ENCODE measurements at regions of chr12 and their contacts with region 1.

Region 1: GRCh38 chr12:46268590-46269558 is at the start of gene SLC38A1:
- DNase-seq: peak; percentile 74 to 96 (median 91)
- ATAC-seq: peak; percentile 56
- H3K4me3 ChIP-seq: peak within 1 kb of the TSS; percentile 92 to 96
- H3K4me3 Mint-ChIP-seq: no peak within 1 kb of the TSS
- H3K27ac ChIP-seq: peak within 1 kb of the TSS; percentile 96 to 98
- H3K27ac Mint-ChIP-seq: no peak within 1 kb of the TSS
- H3K4me1 ChIP-seq: peaks cover 54% of the 10 kb centered on the region
- H3K4me1 Mint-ChIP-seq: peaks cover 41% of the 10 kb centered on the region
- H3K27me3 ChIP-seq: no peaks in the 10 kb centered on the region
- H3K27me3 Mint-ChIP-seq: no peaks in the 10 kb centered on the region
- CTCF ChIP-seq: no peak
- total RNA-seq, gene SLC38A1: 440 to 464 TPM

Region 2: GRCh38 chr12:45728630-45729232 is 540.1 kb before region 1 on chr12:
- CTCF ChIA-PET with region 1: no interaction called
- POLR2A ChIA-PET with region 1: interaction called, 21 read pairs
- intact Hi-C with region 1: loop called in 1 of 2 experiments (anchors 5 kb)
- DNase-seq: peak; percentile 93 to 98 (median 97)
- ATAC-seq: peak; percentile 76
- H3K4me3 ChIP-seq: peak overlapping the region; percentile 85 to 90
- H3K4me3 Mint-ChIP-seq: peak overlapping the region; percentile 96
- H3K27ac ChIP-seq: peak overlapping the region; percentile 90 to 96
- H3K27ac Mint-ChIP-seq: peak overlapping the region; percentile 97
- H3K4me1 ChIP-seq: peaks cover 20% of the 10 kb centered on the region
- H3K4me1 Mint-ChIP-seq: peaks cover 26% of the 10 kb centered on the region
- H3K27me3 ChIP-seq: no peaks in the 10 kb centered on the region
- H3K27me3 Mint-ChIP-seq: no peaks in the 10 kb centered on the region
- CTCF ChIP-seq: peak; percentile 90

Region 3: DNA sequence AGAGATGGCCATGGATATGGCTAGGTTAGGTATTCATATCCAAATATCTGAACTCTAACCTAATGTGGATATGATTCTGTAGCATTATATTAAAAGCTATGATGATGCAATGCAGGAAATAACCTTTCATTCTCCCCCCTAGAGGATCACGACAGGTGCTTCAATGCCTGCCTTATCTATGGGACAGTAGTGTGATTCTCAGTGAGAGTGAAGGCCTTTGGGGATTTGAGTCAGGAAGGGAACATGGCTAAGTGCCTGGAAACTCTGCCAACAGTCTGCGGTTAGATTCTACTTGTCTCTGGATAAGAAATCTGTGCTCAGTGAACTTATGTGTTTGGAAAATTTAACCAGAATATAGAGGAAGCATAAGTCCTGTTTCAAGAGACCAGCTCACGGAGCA is 81.9 kb before region 1 on chr12:
- CTCF ChIA-PET with region 1: no interaction called
- POLR2A ChIA-PET with region 1: interaction called, 12 read pairs
- intact Hi-C with region 1: no loop called
- DNase-seq: peak in 1 of 9 experiments; percentile 40
- ATAC-seq: peak; percentile 33
- H3K4me3 ChIP-seq: no peak overlapping the region
- H3K4me3 Mint-ChIP-seq: no peak overlapping the region
- H3K27ac ChIP-seq: peak overlapping the region in 1 of 2 experiments; percentile 2
- H3K27ac Mint-ChIP-seq: peak overlapping the region; percentile 61
- H3K4me1 ChIP-seq: no peaks in the 10 kb centered on the region
- H3K4me1 Mint-ChIP-seq: peaks cover 40% of the 10 kb centered on the region
- H3K27me3 ChIP-seq: no peaks in the 10 kb centered on the region
- H3K27me3 Mint-ChIP-seq: no peaks in the 10 kb centered on the region
- CTCF ChIP-seq: no peak

Region 4: GRCh38 chr12:46209914-46210872 is 58.7 kb before region 1 on chr12:
- CTCF ChIA-PET with region 1: interaction called, 8 read pairs
- POLR2A ChIA-PET with region 1: interaction called, 232 read pairs
- intact Hi-C with region 1: loop called (anchors 1 kb)
- DNase-seq: peak in 8 of 9 experiments; percentile 39 to 84 (median 66)
- ATAC-seq: peak; percentile 63
- H3K4me3 ChIP-seq: no peak overlapping the region
- H3K4me3 Mint-ChIP-seq: peak overlapping the region; percentile 69
- H3K27ac ChIP-seq: peak overlapping the region; percentile 38 to 83
- H3K27ac Mint-ChIP-seq: peak overlapping the region; percentile 94
- H3K4me1 ChIP-seq: peaks cover 85% of the 10 kb centered on the region
- H3K4me1 Mint-ChIP-seq: peaks cover 95% of the 10 kb centered on the region
- H3K27me3 ChIP-seq: no peaks in the 10 kb centered on the region
- H3K27me3 Mint-ChIP-seq: no peaks in the 10 kb centered on the region
- CTCF ChIP-seq: no peak

Region 5: GRCh38 chr12:46224386-46224785 is 44.5 kb before region 1 on chr12:
- CTCF ChIA-PET with region 1: interaction called, 4 read pairs
- POLR2A ChIA-PET with region 1: interaction called, 232 read pairs
- intact Hi-C with region 1: no loop called
- DNase-seq: no peak
- ATAC-seq: no peak
- H3K4me3 ChIP-seq: no peak overlapping the region
- H3K4me3 Mint-ChIP-seq: no peak overlapping the region
- H3K27ac ChIP-seq: peak overlapping the region in 1 of 2 experiments; percentile 22
- H3K27ac Mint-ChIP-seq: peak overlapping the region; percentile 87
- H3K4me1 ChIP-seq: peaks cover 70% of the 10 kb centered on the region
- H3K4me1 Mint-ChIP-seq: peaks cover 93% of the 10 kb centered on the region
- H3K27me3 ChIP-seq: no peaks in the 10 kb centered on the region
- H3K27me3 Mint-ChIP-seq: no peaks in the 10 kb centered on the region
- CTCF ChIP-seq: no peak

Region 6: GRCh38 chr12:46246021-46246700 is 22.7 kb before region 1 on chr12:
- CTCF ChIA-PET with region 1: interaction called, 3 read pairs
- POLR2A ChIA-PET with region 1: interaction called, 25 read pairs
- intact Hi-C with region 1: loop called (anchors 2 kb)
- DNase-seq: peak in 8 of 9 experiments; percentile 29 to 82 (median 46)
- ATAC-seq: peak; percentile 89
- H3K4me3 ChIP-seq: no peak overlapping the region
- H3K4me3 Mint-ChIP-seq: peak overlapping the region; percentile 64
- H3K27ac ChIP-seq: peak overlapping the region in 1 of 2 experiments; percentile 59
- H3K27ac Mint-ChIP-seq: peak overlapping the region; percentile 86
- H3K4me1 ChIP-seq: peaks cover 57% of the 10 kb centered on the region
- H3K4me1 Mint-ChIP-seq: peaks cover 92% of the 10 kb centered on the region
- H3K27me3 ChIP-seq: no peaks in the 10 kb centered on the region
- H3K27me3 Mint-ChIP-seq: no peaks in the 10 kb centered on the region
- CTCF ChIP-seq: no peak

Region 7: DNA sequence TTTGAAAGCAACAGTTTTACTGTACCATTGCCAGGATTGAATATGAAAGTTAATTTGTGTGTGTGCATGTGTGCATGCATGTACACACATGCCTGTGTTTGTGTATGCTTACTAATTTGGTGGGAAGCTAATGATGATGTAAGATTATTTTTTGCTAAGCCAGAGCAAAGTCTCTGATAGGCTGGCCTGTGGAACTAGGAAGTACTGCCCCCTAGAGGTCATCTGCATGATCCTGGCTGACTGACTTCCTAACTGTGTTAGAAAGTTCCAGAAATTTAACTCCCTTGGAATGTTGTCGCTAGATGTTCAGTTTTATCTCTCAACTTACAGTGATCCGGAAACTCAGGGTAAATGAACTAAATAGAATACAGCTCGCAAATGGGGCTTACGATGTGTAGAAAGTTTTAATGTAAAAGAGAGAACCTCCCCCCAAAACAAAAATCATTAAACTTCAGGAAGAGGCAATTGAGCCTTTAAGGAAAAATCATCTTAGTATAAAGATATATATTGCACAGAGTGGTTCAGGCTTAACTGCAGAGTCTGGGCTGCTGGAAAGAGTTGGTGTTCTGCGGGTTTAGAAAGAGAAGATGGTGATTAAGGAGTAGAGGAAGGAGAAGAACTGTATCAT is 34.3 kb after region 1 on chr12:
- CTCF ChIA-PET with region 1: interaction called, 36 read pairs
- POLR2A ChIA-PET with region 1: interaction called, 5 read pairs
- intact Hi-C with region 1: loop called (anchors 1 to 5 kb)
- DNase-seq: peak; percentile 7 to 84 (median 59)
- ATAC-seq: peak; percentile 81
- H3K4me3 ChIP-seq: no peak overlapping the region
- H3K4me3 Mint-ChIP-seq: no peak overlapping the region
- H3K27ac ChIP-seq: no peak overlapping the region
- H3K27ac Mint-ChIP-seq: no peak overlapping the region
- H3K4me1 ChIP-seq: peaks cover 4% of the 10 kb centered on the region
- H3K4me1 Mint-ChIP-seq: peaks cover 21% of the 10 kb centered on the region
- H3K27me3 ChIP-seq: no peaks in the 10 kb centered on the region
- H3K27me3 Mint-ChIP-seq: no peaks in the 10 kb centered on the region
- CTCF ChIP-seq: peak; percentile 87

Region 8: GRCh38 chr12:46419675-46420074 is 150.8 kb after region 1 on chr12:
- CTCF ChIA-PET with region 1: no interaction called
- POLR2A ChIA-PET with region 1: no interaction called
- intact Hi-C with region 1: no loop called
- DNase-seq: no peak
- ATAC-seq: no peak
- H3K4me3 ChIP-seq: no peak overlapping the region
- H3K4me3 Mint-ChIP-seq: no peak overlapping the region
- H3K27ac ChIP-seq: no peak overlapping the region
- H3K27ac Mint-ChIP-seq: no peak overlapping the region
- H3K4me1 ChIP-seq: no peaks in the 10 kb centered on the region
- H3K4me1 Mint-ChIP-seq: no peaks in the 10 kb centered on the region
- H3K27me3 ChIP-seq: no peaks in the 10 kb centered on the region
- H3K27me3 Mint-ChIP-seq: no peaks in the 10 kb centered on the region
- CTCF ChIP-seq: no peak

Measured in CD8-positive, alpha-beta T cell (primary cell).